ENCODE measurements at regions of chr19 and their contacts with region 1.

Region 1: DNA sequence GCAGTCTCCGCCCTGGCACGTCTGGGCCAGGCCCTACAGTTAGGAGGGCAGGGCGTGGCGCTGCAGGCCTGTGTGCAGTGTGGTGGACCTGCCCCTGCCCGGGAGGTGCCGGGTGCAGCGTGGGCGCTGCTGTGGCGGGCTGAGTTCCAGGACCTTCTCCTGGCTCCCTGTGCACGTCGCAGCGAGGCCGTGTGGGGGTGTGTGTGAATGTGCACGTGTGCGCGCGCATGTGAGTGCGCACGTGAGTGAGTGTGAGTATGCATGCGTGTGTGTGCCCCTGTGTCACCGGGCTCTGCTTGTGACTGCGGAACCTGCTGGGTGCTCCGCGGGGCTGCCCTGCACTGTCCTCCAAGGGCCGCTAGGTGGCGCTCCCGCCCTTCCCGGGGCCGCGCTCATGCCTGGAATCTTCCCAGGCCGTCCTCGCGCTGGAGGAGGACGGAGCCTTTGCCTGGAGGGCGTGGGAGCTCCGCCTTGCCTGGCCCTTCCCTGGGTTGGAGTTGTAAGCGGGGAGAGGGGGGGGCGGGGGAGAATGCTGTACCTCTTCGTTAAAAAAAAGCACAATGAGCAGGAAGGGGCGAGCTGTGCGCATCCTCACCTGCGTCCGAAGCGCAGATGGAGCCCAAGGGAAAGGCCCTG is 79.3 kb downstream of the KDM4B start:
- DNase-seq: peak; percentile 81 to 89
- ATAC-seq: peak; percentile 82 to 93 (median 84)
- H3K4me3 ChIP-seq: peak overlapping the region; percentile 18
- H3K27ac ChIP-seq: no peak overlapping the region
- H3K4me1 ChIP-seq: peaks cover 39% of the 10 kb centered on the region
- H3K27me3 ChIP-seq: no peaks in the 10 kb centered on the region
- CTCF ChIP-seq: peak; percentile 99

Region 2: GRCh38 chr19:5086725-5087439 is 38.7 kb after region 1 on chr19:
- intact Hi-C with region 1: loop called in 1 of 2 experiments (anchors 5 kb)
- DNase-seq: peak in 1 of 2 donors; percentile 70
- ATAC-seq: peak; percentile 67 to 88 (median 76)
- H3K4me3 ChIP-seq: no peak overlapping the region
- H3K27ac ChIP-seq: peak overlapping the region; percentile 16
- H3K4me1 ChIP-seq: peaks cover 19% of the 10 kb centered on the region
- H3K27me3 ChIP-seq: no peaks in the 10 kb centered on the region
- CTCF ChIP-seq: peak; percentile 45

Region 3: DNA sequence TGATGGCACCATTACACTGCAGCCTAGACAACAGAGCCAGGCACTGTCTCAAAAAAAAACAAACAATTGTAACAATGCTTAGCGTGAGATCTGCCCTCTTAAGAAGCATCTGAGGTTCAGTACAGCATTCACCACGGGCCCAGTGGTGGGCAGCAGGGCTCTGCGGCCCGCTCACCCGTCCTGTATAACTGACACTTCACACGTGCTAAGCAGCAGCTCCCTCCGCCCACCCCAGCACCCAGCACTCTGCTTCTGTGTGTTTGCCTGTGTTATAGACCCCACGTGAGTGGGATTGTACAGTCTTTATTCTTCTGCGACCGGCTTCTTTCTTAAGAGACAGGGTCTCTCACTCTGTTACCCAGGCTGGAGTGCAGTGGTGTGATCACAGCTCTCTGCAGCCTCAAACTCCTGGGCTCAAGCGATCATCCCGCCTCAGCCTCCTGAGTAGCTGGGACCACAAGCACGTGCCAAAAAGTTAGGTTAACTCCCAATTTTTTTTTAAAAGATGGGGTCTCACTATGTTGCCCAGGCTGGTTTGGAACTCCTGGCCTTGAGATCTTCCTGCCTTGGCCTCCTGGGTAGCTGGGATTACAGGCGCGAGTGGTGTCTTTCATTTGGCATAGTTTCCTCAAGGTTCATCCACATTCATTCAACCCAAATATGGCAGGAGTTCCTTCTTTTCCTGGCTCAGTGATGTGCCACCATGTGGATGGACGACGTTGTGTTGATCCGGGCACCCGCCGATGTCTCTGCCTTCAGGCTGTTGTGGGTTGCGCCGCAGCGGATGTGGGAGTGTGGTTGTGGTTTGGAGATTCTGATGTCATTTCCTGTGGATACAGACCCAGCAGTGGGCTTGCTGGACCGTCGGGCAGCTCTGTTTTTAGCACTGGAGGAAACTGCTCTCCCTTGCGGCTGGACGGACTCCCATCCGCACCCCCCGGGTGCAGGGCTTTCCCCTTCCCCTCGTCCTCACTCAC is 90.7 kb after region 1 on chr19:
- intact Hi-C with region 1: loop called in 1 of 2 experiments (anchors 5 kb)
- DNase-seq: peak in 1 of 2 donors; percentile 66
- ATAC-seq: no peak
- H3K4me3 ChIP-seq: no peak overlapping the region
- H3K27ac ChIP-seq: no peak overlapping the region
- H3K4me1 ChIP-seq: no peaks in the 10 kb centered on the region
- H3K27me3 ChIP-seq: no peaks in the 10 kb centered on the region
- CTCF ChIP-seq: no peak

Region 4: GRCh38 chr19:5154129-5154798 is 106.1 kb after region 1 on chr19:
- intact Hi-C with region 1: loop called in 1 of 2 experiments (anchors 5 kb)
- DNase-seq: no peak
- ATAC-seq: peak in 3 of 4 donors; percentile 42 to 67 (median 65)
- H3K4me3 ChIP-seq: no peak overlapping the region
- H3K27ac ChIP-seq: no peak overlapping the region
- H3K4me1 ChIP-seq: peaks cover 22% of the 10 kb centered on the region
- H3K27me3 ChIP-seq: no peaks in the 10 kb centered on the region
- CTCF ChIP-seq: peak; percentile 36

Region 5: DNA sequence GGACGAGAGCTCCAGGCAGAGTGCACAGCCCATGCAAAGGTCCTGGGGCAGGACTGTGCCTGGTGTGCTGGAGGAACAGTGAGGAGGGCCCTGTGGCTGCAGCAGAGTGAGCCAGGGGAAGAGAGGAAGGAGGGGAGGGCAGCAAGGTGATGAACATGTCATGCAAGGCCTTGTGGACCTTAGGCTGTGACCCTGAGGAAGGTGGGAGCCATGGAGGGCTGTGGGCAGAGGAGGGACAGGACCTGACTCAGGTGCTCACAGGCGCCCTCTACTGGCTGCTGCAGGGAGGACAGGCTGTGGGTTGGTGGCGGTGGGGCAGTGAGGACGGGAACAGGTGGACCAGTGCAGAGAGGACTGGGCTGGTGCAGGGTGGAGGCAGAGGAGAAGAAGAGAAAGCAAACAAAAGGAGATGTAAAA is 122.1 kb after region 1 on chr19:
- intact Hi-C with region 1: no loop called
- DNase-seq: no peak
- ATAC-seq: peak in 1 of 4 donors; percentile 41
- H3K4me3 ChIP-seq: no peak overlapping the region
- H3K27ac ChIP-seq: no peak overlapping the region
- H3K4me1 ChIP-seq: no peaks in the 10 kb centered on the region
- H3K27me3 ChIP-seq: no peaks in the 10 kb centered on the region
- CTCF ChIP-seq: peak; percentile 16

Region 6: DNA sequence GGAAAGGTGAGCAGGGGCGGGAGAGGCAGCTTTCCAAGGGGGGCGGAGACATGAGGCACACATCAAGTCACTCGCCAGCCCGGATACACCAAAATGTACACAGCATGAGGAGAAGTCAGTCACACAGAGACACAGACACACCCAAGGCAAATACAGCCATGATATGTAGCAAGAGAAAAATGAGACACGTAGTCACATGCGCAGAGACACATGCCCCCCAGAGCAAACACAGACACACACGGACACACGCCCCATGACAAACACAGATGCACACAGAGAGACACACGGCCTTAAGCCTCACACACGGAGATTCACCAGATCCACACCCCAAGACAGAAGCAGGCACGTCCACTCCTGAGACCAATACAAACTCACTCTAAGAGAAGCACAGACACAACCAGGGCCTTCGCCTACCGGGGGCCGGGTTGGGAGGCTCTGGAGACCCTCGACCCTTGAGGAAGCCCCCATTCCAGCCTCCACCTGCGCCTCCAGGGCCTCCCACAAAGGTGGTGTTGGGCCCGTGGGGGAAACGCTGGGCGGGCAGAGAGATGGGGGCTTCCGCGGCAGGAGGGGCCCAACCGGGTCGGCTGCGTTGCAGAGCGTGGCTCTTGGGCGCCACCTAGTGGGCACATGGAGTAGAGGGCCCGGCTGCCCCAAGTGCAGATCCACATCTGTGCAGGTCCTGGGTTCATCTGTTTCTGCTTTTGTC is 529.7 kb after region 1 on chr19:
- intact Hi-C with region 1: loop called (anchors 2 to 10 kb)
- DNase-seq: peak; percentile 62 to 81
- ATAC-seq: peak; percentile 77 to 86 (median 84)
- H3K4me3 ChIP-seq: no peak overlapping the region
- H3K27ac ChIP-seq: no peak overlapping the region
- H3K4me1 ChIP-seq: no peaks in the 10 kb centered on the region
- H3K27me3 ChIP-seq: no peaks in the 10 kb centered on the region
- CTCF ChIP-seq: peak; percentile 99

Measured in psoas muscle (tissue), 8 donors.